ENCODE measurements at regions of chr4 and their contacts with region 1.

Region 1: GRCh38 chr4:69689599-69689998 is 36.6 kb upstream of the UGT2A1 start:
- DNase-seq: peak; percentile 26
- ATAC-seq: no peak; the same call in 1 of the 2 replicates
- H3K4me3 ChIP-seq: no peak overlapping the region
- H3K27ac ChIP-seq: no peak overlapping the region
- H3K4me1 ChIP-seq: no peaks in the 10 kb centered on the region
- H3K27me3 ChIP-seq: no peaks in the 10 kb centered on the region
- CTCF ChIP-seq: peak; percentile 60
- POLR2A ChIP-seq: no peak
- RAD21 ChIP-seq: peak; percentile 70

Region 2: GRCh38 chr4:69881173-69881773 is 191.7 kb after region 1 on chr4:
- CTCF ChIA-PET with region 1: no interaction called
- POLR2A ChIA-PET with region 1: no interaction called
- dilution Hi-C with region 1: no loop called
- in situ Hi-C with region 1: loop called (anchors 5 kb)
- intact Hi-C with region 1: loop called (anchors 1 kb)
- DNase-seq: peak; percentile 44
- ATAC-seq: peak; percentile 87
- H3K4me3 ChIP-seq: no peak overlapping the region
- H3K27ac ChIP-seq: no peak overlapping the region
- H3K4me1 ChIP-seq: no peaks in the 10 kb centered on the region
- H3K27me3 ChIP-seq: no peaks in the 10 kb centered on the region
- CTCF ChIP-seq: peak; percentile 78
- POLR2A ChIP-seq: no peak
- RAD21 ChIP-seq: peak; percentile 82

Region 3: DNA sequence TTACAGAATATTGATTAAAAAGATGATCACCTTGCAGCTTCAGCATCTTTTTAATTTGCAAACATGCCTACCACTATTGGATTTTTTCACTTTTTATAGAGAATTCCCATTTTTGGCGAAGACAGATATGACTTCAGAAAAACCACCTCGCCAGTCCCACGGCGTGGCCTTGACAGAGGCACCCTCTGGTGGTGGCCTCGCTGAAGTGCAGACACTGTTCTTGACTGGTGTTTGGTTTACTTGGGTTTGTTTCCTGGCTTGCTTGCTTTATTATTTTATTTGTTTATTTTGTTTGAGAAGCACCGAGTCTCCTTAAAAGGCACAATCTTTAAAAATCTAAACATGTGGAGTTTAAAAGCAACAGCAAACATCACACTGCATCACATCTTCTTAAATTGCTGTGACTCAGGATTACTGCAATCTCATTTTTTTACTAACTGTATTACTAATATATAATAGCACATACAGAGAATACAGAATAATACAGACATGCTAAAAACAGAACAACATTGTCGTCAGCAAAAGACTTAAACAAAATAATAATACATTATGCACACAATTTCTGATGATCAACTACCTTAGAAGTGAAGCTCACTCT is 815.7 kb after region 1 on chr4:
- CTCF ChIA-PET with region 1: no interaction called
- POLR2A ChIA-PET with region 1: no interaction called
- dilution Hi-C with region 1: no loop called
- in situ Hi-C with region 1: loop called (anchors 25 kb)
- intact Hi-C with region 1: loop called (anchors 1 kb)
- DNase-seq: peak; percentile 39
- ATAC-seq: peak; percentile 95
- H3K4me3 ChIP-seq: no peak overlapping the region
- H3K27ac ChIP-seq: no peak overlapping the region
- H3K4me1 ChIP-seq: no peaks in the 10 kb centered on the region
- H3K27me3 ChIP-seq: no peaks in the 10 kb centered on the region
- CTCF ChIP-seq: peak; percentile 82
- POLR2A ChIP-seq: 0 out of 2 replicates have a peak, but pooled peaks have one; percentile 21
- RAD21 ChIP-seq: peak; percentile 83

Region 4: GRCh38 chr4:70559211-70559830 is 869.7 kb after region 1 on chr4:
- CTCF ChIA-PET with region 1: no interaction called
- POLR2A ChIA-PET with region 1: no interaction called
- dilution Hi-C with region 1: no loop called
- in situ Hi-C with region 1: no loop called
- intact Hi-C with region 1: loop called (anchors 2 kb)
- DNase-seq: peak; percentile 34
- ATAC-seq: peak; percentile 89
- H3K4me3 ChIP-seq: no peak overlapping the region
- H3K27ac ChIP-seq: no peak overlapping the region
- H3K4me1 ChIP-seq: no peaks in the 10 kb centered on the region
- H3K27me3 ChIP-seq: no peaks in the 10 kb centered on the region
- CTCF ChIP-seq: peak; percentile 70
- POLR2A ChIP-seq: no peak
- RAD21 ChIP-seq: peak; percentile 60